CD4-positive, alpha-beta memory T cell (primary cell): ENCODE measurements at regions of chr13 and their contacts with region 1.

Region 1: DNA sequence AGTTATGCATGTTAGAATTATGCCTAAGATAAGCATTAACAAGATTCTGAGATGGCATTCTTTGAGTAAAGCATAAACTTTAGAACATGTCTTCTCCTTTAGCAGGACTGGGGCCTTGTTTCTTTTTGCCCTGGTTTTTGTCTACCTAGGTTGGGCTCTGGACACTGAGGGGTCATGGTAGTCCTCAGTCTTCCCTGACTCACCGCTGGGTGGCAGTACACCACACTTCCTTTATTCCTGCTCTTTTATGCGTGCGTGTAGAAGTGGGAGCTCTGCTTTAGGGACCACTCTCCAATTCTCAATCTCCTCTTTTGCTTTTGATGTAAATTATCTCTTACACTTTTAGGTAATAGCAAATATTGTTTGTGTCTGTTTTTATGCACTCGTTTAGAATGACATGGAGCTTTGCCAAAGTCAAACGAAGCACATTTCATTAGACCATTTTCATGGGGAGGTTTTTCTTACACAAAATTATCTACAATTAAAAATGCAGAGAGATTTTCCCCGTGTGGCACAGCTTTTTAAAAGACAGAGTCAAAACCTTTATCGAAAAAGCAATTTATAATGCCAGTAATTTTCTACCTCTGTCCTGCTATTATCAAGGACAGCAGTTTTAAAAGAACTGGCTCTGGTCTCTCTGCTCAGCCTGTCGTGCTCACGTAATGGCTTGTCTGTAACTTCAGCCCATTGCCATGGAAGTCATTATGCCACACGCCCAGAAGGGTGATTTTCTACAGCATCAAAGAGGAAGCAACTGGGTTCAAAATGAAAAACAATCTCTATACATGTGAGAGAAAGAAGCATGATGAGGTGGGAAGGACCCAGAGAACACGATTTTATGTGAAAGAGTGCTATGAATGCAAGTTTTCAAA is 413.9 kb downstream of the COG6 start:
- DNase-seq: peak; percentile 53 to 71 (median 66)
- H3K4me3 ChIP-seq: no peak overlapping the region
- H3K4me3 Mint-ChIP-seq: peak overlapping the region in 6 of 8 donors; percentile 27 to 67 (median 40)
- H3K27ac ChIP-seq: no peak overlapping the region
- H3K27ac Mint-ChIP-seq: peak overlapping the region in 6 of 7 donors; percentile 6 to 87 (median 72)
- H3K4me1 ChIP-seq: peaks cover 19% of the 10 kb centered on the region
- H3K4me1 Mint-ChIP-seq: peaks cover 11 to 24% (median 16%) of the 10 kb centered on the region in 4 donors
- H3K27me3 ChIP-seq: no peaks in the 10 kb centered on the region
- H3K27me3 Mint-ChIP-seq: no peaks in the 10 kb centered on the region

Region 2: DNA sequence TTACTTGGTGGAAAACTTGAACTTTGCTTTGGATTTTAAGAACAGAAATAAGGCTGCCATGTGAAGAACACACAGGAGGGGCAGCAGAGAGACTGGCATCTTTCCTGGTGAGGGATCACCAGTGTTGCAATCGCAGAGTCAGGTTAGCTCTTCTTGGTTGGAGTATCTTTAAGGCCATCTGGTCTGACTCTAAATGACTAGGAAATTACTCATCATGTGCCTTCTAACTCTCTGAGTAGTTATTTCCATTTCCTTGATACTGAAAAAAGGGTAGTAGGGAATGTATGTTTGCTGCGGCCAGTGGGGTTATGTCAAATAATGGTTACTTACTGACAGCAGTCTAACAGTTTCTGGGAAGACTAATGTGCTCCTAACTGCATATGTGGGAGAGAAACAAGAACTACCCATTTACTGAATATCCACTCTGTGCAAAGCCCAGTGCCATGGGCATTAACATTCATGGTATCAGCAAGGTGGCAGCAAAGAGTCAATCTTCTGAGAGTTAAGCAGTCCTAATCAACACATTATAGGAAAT is 291.8 kb before region 1 on chr13:
- CTCF ChIA-PET with region 1: interaction called, 9 read pairs
- POLR2A ChIA-PET with region 1: no interaction called
- intact Hi-C with region 1: loop called (anchors 1 kb)
- DNase-seq: peak; percentile 28 to 51 (median 37)
- H3K4me3 ChIP-seq: no peak overlapping the region
- H3K4me3 Mint-ChIP-seq: no peak overlapping the region
- H3K27ac ChIP-seq: no peak overlapping the region
- H3K27ac Mint-ChIP-seq: peak overlapping the region in 5 of 7 donors; percentile 22 to 78 (median 62)
- H3K4me1 ChIP-seq: peaks cover 29% of the 10 kb centered on the region
- H3K4me1 Mint-ChIP-seq: peaks cover 25 to 33% (median 29%) of the 10 kb centered on the region in 4 donors
- H3K27me3 ChIP-seq: no peaks in the 10 kb centered on the region
- H3K27me3 Mint-ChIP-seq: no peaks in the 10 kb centered on the region

Region 3: GRCh38 chr13:40206241-40207000 is 137.0 kb after region 1 on chr13:
- CTCF ChIA-PET with region 1: interaction called, 23 read pairs
- POLR2A ChIA-PET with region 1: interaction called, 6 read pairs
- intact Hi-C with region 1: loop called (anchors 1 kb)
- DNase-seq: peak; percentile 56 to 70 (median 65)
- H3K4me3 ChIP-seq: peak overlapping the region in 1 of 2 donors; percentile 21
- H3K4me3 Mint-ChIP-seq: peak overlapping the region; percentile 46 to 89 (median 78)
- H3K27ac ChIP-seq: peak overlapping the region; percentile 53
- H3K27ac Mint-ChIP-seq: peak overlapping the region; percentile 90 to 99 (median 98)
- H3K4me1 ChIP-seq: peaks cover 60% of the 10 kb centered on the region
- H3K4me1 Mint-ChIP-seq: peaks cover 47 to 81% (median 61%) of the 10 kb centered on the region in 4 donors
- H3K27me3 ChIP-seq: no peaks in the 10 kb centered on the region
- H3K27me3 Mint-ChIP-seq: no peaks in the 10 kb centered on the region

Region 4: DNA sequence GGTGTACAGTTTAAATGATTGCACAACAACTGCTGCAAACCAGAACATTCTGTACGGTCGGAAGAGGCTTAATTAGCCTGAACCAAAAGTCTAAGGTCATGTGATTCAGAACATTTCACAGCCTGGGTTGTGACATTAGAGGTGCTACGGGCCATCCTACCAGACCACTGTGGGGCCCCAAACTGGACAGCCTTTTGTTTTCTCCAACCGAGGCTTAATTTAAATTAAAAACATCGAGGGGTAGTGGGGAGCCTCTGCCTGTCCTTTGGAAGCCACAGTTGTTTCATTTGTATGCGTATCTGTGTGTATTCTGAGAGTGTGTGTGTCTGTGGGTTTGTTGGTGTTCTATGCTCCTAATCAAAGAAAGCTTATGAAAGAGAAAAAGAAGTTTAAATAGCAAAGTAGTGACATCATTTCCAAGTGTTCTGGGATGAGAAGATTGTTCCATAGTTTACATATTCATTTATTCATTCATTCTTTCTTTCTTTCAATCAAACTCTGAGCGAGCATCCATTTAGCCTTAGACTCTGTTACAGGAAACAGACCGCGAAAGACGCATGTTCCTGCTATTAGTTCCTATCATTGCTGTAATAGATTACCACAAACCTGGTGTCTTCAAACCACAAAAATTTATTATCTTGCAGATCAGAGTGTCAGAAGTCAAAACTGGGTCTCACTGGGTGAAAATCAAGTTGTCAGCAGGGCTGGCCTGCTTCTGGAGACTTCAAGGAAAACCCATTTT is 152.2 kb after region 1 on chr13:
- CTCF ChIA-PET with region 1: interaction called, 11 read pairs
- POLR2A ChIA-PET with region 1: no interaction called
- intact Hi-C with region 1: no loop called
- DNase-seq: peak; percentile 82 to 89 (median 85)
- H3K4me3 ChIP-seq: no peak overlapping the region
- H3K4me3 Mint-ChIP-seq: peak overlapping the region; percentile 51 to 86 (median 76)
- H3K27ac ChIP-seq: peak overlapping the region; percentile 54
- H3K27ac Mint-ChIP-seq: peak overlapping the region; percentile 90 to 99 (median 97)
- H3K4me1 ChIP-seq: peaks cover 44% of the 10 kb centered on the region
- H3K4me1 Mint-ChIP-seq: peaks cover 40 to 59% (median 52%) of the 10 kb centered on the region in 4 donors
- H3K27me3 ChIP-seq: no peaks in the 10 kb centered on the region
- H3K27me3 Mint-ChIP-seq: no peaks in the 10 kb centered on the region

Region 5: GRCh38 chr13:40682449-40683240 is 613.2 kb after region 1 on chr13:
- CTCF ChIA-PET with region 1: interaction called, 107 read pairs
- POLR2A ChIA-PET with region 1: interaction called, 7 read pairs
- intact Hi-C with region 1: loop called (anchors 1 kb)
- DNase-seq: peak in 4 of 5 donors; percentile 44 to 58 (median 52)
- H3K4me3 ChIP-seq: no peak overlapping the region
- H3K4me3 Mint-ChIP-seq: peak overlapping the region in 1 of 8 donors; percentile 46
- H3K27ac ChIP-seq: no peak overlapping the region
- H3K27ac Mint-ChIP-seq: peak overlapping the region in 1 of 7 donors; percentile 48
- H3K4me1 ChIP-seq: peaks cover 4% of the 10 kb centered on the region
- H3K4me1 Mint-ChIP-seq: peaks cover 5 to 8% (median 6%) of the 10 kb centered on the region in 4 donors
- H3K27me3 ChIP-seq: no peaks in the 10 kb centered on the region
- H3K27me3 Mint-ChIP-seq: no peaks in the 10 kb centered on the region